Mammary epithelial cell (primary cell): ENCODE measurements at regions of chr11 and their contacts with region 1.

Region 1: DNA sequence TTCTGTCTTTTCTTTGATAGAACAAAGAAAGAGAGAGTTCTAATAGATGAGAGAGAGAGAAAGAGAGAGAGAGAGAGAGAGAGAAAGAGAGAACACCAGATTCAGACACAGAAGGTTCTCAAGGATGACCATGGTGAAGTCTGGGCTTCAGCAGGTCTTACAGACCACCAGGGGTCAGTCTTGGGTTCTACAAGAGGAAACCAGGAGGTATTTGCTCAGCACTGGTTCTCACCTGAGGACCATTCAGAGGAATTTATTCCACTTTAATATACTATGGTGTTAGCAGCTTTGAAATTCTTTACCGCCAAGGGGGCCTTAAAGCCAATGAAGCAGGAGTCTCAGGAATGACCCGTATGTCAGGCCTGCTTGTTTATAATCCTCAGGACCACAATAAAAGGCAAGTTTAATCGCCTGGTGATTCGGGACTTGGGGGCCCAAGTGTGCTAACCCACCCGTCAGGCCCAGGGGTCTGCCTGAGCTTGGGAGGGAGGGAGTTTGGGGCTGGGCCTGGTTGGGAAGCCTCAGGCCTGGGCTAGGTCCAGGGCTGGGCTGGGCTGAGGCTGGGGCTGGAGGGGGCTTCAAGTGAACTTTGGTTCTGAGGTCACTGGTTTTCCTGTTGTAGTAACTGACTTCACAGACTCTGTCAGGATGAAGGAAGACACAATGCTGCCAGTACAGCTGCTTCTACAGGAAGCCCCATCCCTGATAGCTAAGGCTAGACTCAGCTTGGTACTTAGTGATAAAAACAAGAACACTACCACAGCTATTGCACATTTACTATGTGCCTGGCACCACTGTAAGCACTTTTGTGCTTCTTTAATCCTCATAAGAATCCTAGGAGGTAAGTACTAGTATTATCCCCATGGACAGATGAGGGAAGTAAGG is 179.2 kb upstream of the ZBED5 start:
- DNase-seq: peak; percentile 50
- H3K4me3 ChIP-seq: no peak overlapping the region
- H3K27ac ChIP-seq: no peak overlapping the region
- H3K4me1 ChIP-seq: peaks cover 5% of the 10 kb centered on the region
- H3K27me3 ChIP-seq: no peaks in the 10 kb centered on the region
- CTCF ChIP-seq: peak; percentile 57 to 69

Region 2: GRCh38 chr11:10955616-10956015 is 81.5 kb before region 1 on chr11:
- CTCF ChIA-PET with region 1: interaction called, 3 read pairs
- dilution Hi-C with region 1: loop called (anchors 5 kb)
- in situ Hi-C with region 1: no loop called
- intact Hi-C with region 1: no loop called
- DNase-seq: no peak
- H3K4me3 ChIP-seq: no peak overlapping the region
- H3K27ac ChIP-seq: no peak overlapping the region
- H3K4me1 ChIP-seq: no peaks in the 10 kb centered on the region
- H3K27me3 ChIP-seq: no peaks in the 10 kb centered on the region
- CTCF ChIP-seq: no peak

Region 3: GRCh38 chr11:11069841-11070835 is 33.0 kb after region 1 on chr11:
- CTCF ChIA-PET with region 1: no interaction called
- dilution Hi-C with region 1: loop called (anchors 5 kb)
- in situ Hi-C with region 1: no loop called
- intact Hi-C with region 1: no loop called
- DNase-seq: no peak
- H3K4me3 ChIP-seq: no peak overlapping the region
- H3K27ac ChIP-seq: no peak overlapping the region
- H3K4me1 ChIP-seq: peaks cover 12% of the 10 kb centered on the region
- H3K27me3 ChIP-seq: peaks cover 2% of the 10 kb centered on the region
- CTCF ChIP-seq: no peak

Region 4: GRCh38 chr11:11125618-11126017 is 88.5 kb after region 1 on chr11:
- CTCF ChIA-PET with region 1: no interaction called
- dilution Hi-C with region 1: loop called (anchors 5 kb)
- in situ Hi-C with region 1: no loop called
- intact Hi-C with region 1: no loop called
- DNase-seq: no peak
- H3K4me3 ChIP-seq: no peak overlapping the region
- H3K27ac ChIP-seq: no peak overlapping the region
- H3K4me1 ChIP-seq: no peaks in the 10 kb centered on the region
- H3K27me3 ChIP-seq: peaks cover 15% of the 10 kb centered on the region
- CTCF ChIP-seq: no peak

Region 5: DNA sequence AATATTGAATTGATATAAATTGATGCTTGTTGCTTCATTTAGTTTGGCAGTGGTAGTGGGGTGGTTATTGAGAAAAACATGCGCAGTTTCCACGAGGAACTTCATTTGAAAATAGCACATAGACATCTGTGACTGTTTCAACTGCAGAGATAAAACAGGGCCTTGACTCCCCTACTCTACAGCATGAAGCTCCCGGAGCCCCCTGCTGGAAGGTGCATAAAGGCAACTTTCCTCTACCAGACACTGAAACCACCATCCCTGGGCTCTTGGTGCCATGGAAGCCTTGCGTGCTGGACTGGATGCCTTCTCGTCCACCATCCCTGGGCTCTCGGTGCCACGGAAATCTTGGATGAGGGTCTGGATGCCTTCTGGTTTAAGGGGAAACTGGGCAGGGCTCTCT is 120.1 kb after region 1 on chr11:
- CTCF ChIA-PET with region 1: no interaction called
- dilution Hi-C with region 1: no loop called
- in situ Hi-C with region 1: no loop called
- intact Hi-C with region 1: loop called (anchors 10 kb)
- DNase-seq: no peak
- H3K4me3 ChIP-seq: no peak overlapping the region
- H3K27ac ChIP-seq: no peak overlapping the region
- H3K4me1 ChIP-seq: no peaks in the 10 kb centered on the region
- H3K27me3 ChIP-seq: no peaks in the 10 kb centered on the region
- CTCF ChIP-seq: peak; percentile 37 to 53